ENCODE measurements at regions of chr16 and their contacts with region 1.

Region 1: GRCh38 chr16:50741808-50742575 is at the start of gene CYLD:
- DNase-seq: peak; percentile 100
- H3K4me3 ChIP-seq: peak within 1 kb of the TSS; percentile 68 to 99 (median 95)
- H3K27ac ChIP-seq: peak within 1 kb of the TSS; percentile 88 to 95 (median 92)
- H3K4me1 ChIP-seq: peaks cover 0 to 42% (median 32%) of the 10 kb centered on the region in 4 donors
- H3K27me3 ChIP-seq: no peaks in the 10 kb centered on the region
- CTCF ChIP-seq: no peak
- EP300 ChIP-seq: no peak
- POLR2A ChIP-seq: peak in 1 of 2 donors; percentile 29
- total RNA-seq, gene CYLD: 29.6 to 45.3 (median 38.5) TPM

Region 2: DNA sequence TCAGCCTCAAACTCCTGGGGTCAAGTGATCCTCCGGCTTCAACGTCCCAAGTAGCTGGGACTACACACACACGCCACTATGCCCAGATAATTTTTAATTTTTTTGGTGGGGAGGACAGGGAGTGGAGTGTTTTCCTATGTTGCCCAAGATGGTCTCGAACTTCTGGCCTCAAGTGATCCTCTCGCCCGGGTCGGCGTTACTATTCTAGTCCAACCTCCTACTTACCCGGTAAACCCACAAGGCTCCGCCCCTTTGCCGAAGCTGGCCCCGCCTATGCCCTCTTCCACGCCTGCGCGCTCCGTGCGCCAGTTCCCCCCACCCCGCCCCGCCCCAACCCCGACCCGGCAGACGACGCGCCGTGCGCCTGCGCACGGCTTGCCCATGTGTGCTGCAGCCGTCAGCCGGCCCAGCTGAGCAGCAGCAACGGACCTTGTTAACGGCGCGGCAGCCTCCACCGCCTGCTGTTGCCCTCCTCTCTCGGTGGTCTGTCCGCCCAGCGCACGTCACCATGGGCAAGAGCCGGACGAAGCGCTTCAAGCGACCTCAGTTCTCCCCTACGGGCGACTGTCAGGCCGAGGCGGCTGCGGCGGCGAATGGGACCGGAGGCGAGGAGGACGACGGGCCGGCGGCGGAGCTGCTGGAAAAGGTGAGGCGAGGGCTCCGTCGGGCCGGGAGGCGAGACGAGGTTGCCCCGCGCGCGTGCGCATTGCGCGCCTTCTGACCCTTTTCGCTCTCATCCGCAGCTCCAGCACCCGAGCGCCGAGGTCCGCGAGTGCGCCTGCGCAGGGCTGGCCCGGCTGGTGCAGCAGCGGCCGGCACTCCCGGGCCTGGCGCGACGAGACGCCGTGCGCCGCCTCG is 676.1 kb before region 1 on chr16 and contains the start of gene HEATR3:
- intact Hi-C with region 1: loop called (anchors 10 kb)
- DNase-seq: peak; percentile 95
- H3K4me3 ChIP-seq: peak within 1 kb of the TSS; percentile 83 to 94 (median 93)
- H3K27ac ChIP-seq: peak within 1 kb of the TSS; percentile 94 to 100 (median 98)
- H3K4me1 ChIP-seq: peaks cover 0 to 27% (median 21%) of the 10 kb centered on the region in 4 donors
- H3K27me3 ChIP-seq: no peaks in the 10 kb centered on the region
- CTCF ChIP-seq: no peak
- EP300 ChIP-seq: no peak
- POLR2A ChIP-seq: peak; percentile 42 to 46
- total RNA-seq, gene HEATR3: 14.0 to 20.5 (median 15.1) TPM

Region 3: GRCh38 chr16:50152807-50153452 is 589.1 kb before region 1 on chr16 and contains the start of gene TENT4B:
- intact Hi-C with region 1: loop called (anchors 5 kb)
- DNase-seq: peak; percentile 94
- H3K4me3 ChIP-seq: peak within 1 kb of the TSS; percentile 93 to 98 (median 96)
- H3K27ac ChIP-seq: peak within 1 kb of the TSS; percentile 89 to 96 (median 94)
- H3K4me1 ChIP-seq: peaks cover 0 to 41% (median 29%) of the 10 kb centered on the region in 4 donors
- H3K27me3 ChIP-seq: no peaks in the 10 kb centered on the region
- CTCF ChIP-seq: no peak
- EP300 ChIP-seq: no peak
- POLR2A ChIP-seq: peak; percentile 50 to 66
- total RNA-seq, gene TENT4B: 14.9 to 23.5 (median 20.0) TPM

Region 4: DNA sequence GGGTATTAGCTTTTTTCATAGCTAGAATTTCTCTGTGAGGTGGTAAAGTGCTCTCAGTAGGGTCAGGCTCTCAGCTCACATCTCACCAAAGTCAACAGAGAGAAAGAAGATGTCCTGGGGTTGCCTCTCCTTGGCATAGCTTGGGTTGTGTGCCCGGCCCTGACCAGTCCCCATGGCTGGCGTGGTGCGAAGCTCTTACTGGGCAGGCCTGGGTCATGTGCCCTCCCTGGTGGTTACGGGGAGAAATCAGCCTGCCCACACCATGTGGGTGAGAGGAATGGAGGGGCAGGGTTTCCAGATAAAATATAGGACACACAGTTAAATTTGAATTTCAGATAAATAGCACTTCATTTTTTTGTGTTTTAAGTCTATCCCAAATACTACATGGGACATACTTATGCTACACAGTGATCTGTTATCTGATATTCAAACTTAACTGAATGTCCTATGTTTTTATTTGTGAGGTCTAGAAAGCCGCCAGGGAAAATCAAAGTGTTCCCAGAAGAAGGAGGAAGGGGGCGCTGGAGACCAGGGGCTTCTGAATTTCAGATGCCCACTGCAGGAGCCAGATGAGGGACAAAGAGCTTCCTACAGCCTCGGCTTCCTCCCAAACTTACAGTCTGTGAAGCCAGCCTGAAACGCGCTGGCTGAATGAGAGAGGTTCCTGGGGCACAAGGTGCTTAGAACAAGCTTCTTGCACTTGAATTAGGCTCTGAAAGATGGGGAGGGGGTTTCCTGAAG is 148.4 kb before region 1 on chr16:
- intact Hi-C with region 1: loop called (anchors 10 kb)
- DNase-seq: no peak
- H3K4me3 ChIP-seq: no peak overlapping the region
- H3K27ac ChIP-seq: peak overlapping the region; percentile 76 to 86 (median 82)
- H3K4me1 ChIP-seq: peaks cover 0 to 54% (median 46%) of the 10 kb centered on the region in 4 donors
- H3K27me3 ChIP-seq: no peaks in the 10 kb centered on the region
- CTCF ChIP-seq: peak in 1 of 4 experiments; percentile 21
- EP300 ChIP-seq: no peak
- POLR2A ChIP-seq: no peak

Region 5: DNA sequence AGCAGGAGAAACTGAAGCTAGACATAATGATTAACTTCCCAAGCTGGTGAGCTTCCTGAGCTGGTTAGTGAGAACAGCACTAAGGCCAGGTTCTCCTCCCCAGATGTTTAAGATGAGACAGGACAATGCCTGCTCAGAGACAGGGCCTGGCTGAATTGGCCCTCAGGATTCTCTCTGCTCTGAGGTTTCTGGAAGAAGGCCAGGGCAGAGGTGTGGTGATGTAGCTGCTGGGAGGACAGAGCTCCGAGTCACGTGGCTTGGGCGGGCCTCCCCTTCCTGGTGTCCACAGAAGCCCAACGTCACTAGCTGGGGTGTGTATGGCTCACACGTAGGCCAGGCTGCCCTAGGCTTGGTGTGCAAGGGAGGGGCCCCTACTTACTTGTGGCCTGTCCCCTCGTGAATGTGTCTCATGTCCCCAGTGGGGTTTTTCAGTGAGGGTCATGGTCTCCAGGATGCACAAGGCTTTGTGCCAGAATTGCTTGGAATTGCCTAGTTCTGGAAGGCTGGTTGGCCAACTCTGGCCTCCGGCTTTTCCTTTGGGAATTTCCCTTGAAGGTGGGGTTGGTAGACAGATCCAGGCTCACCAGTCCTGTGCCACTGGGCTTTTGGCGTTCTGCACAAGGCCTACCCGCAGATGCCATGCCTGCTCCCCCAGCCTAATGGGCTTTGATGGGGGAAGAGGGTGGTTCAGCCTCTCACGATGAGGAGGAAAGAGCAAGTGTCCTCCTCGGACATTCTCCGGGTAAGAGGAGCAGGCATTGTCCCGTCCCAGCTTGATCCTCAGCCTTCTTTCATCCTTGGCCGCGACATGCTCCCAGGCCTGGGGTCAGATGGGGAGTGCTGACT is 45.2 kb before region 1 on chr16:
- intact Hi-C with region 1: loop called (anchors 5 kb)
- DNase-seq: peak; percentile 91
- H3K4me3 ChIP-seq: no peak overlapping the region
- H3K27ac ChIP-seq: peak overlapping the region; percentile 48 to 77 (median 64)
- H3K4me1 ChIP-seq: peaks cover 0 to 36% (median 29%) of the 10 kb centered on the region in 4 donors
- H3K27me3 ChIP-seq: peaks cover 0 to 4% (median 0%) of the 10 kb centered on the region in 3 donors
- CTCF ChIP-seq: no peak
- EP300 ChIP-seq: no peak
- POLR2A ChIP-seq: no peak

Region 6: GRCh38 chr16:50940275-50940854 is 198.4 kb after region 1 on chr16:
- intact Hi-C with region 1: no loop called
- DNase-seq: no peak
- H3K4me3 ChIP-seq: no peak overlapping the region
- H3K27ac ChIP-seq: no peak overlapping the region
- H3K4me1 ChIP-seq: no peaks in the 10 kb centered on the region
- H3K27me3 ChIP-seq: no peaks in the 10 kb centered on the region
- CTCF ChIP-seq: no peak
- EP300 ChIP-seq: no peak
- POLR2A ChIP-seq: no peak

Measured in sigmoid colon (tissue), 7 donors.